Endothelial cell of umbilical vein (primary cell): ENCODE measurements at regions of chr10 and their contacts with region 1.

Region 1: GRCh38 chr10:124741281-124741921 is 2.8 kb downstream of the FAM53B start:
- DNase-seq: peak; percentile 85
- H3K4me3 ChIP-seq: peak overlapping the region in 1 of 3 experiments; percentile 17
- H3K27ac ChIP-seq: no peak overlapping the region
- H3K4me1 ChIP-seq: peaks cover 39% of the 10 kb centered on the region
- H3K27me3 ChIP-seq: no peaks in the 10 kb centered on the region
- CTCF ChIP-seq: peak; percentile 77 to 81
- POLR2A ChIP-seq: no peak

Region 2: GRCh38 chr10:124403548-124403947 is 337.9 kb before region 1 on chr10:
- CTCF ChIA-PET with region 1: interaction called, 5 read pairs
- POLR2A ChIA-PET with region 1: no interaction called
- dilution Hi-C with region 1: no loop called
- intact Hi-C with region 1: loop called (anchors 5 kb)
- DNase-seq: peak; percentile 85
- H3K4me3 ChIP-seq: no peak overlapping the region
- H3K27ac ChIP-seq: no peak overlapping the region
- H3K4me1 ChIP-seq: no peaks in the 10 kb centered on the region
- H3K27me3 ChIP-seq: no peaks in the 10 kb centered on the region
- CTCF ChIP-seq: peak; percentile 60 to 64
- POLR2A ChIP-seq: no peak

Region 3: DNA sequence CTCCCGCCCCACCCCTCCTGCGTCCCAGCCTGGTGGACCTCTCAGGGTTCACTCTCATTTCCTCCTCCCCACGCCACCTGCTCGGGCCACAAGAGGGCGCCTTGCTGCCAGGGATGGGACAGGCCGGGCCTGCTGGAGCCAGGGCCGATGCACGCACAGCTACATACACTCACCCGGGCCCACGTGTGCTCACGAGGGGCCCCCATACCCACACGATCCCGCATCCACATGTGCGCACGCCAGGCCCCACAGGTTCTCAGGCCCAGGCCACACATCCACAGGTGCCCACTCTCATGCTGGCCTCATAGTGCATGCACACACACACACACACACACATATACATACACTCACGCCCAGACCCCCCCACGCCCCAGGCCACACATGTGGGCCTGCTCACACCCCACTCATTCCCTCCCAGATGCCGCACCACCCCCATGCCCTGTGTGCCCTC is 211.2 kb before region 1 on chr10:
- CTCF ChIA-PET with region 1: interaction called, 226 read pairs
- POLR2A ChIA-PET with region 1: no interaction called
- dilution Hi-C with region 1: no loop called
- intact Hi-C with region 1: loop called (anchors 1 kb)
- DNase-seq: peak; percentile 66
- H3K4me3 ChIP-seq: no peak overlapping the region
- H3K27ac ChIP-seq: no peak overlapping the region
- H3K4me1 ChIP-seq: no peaks in the 10 kb centered on the region
- H3K27me3 ChIP-seq: no peaks in the 10 kb centered on the region
- CTCF ChIP-seq: peak; percentile 84 to 96
- POLR2A ChIP-seq: no peak

Region 4: DNA sequence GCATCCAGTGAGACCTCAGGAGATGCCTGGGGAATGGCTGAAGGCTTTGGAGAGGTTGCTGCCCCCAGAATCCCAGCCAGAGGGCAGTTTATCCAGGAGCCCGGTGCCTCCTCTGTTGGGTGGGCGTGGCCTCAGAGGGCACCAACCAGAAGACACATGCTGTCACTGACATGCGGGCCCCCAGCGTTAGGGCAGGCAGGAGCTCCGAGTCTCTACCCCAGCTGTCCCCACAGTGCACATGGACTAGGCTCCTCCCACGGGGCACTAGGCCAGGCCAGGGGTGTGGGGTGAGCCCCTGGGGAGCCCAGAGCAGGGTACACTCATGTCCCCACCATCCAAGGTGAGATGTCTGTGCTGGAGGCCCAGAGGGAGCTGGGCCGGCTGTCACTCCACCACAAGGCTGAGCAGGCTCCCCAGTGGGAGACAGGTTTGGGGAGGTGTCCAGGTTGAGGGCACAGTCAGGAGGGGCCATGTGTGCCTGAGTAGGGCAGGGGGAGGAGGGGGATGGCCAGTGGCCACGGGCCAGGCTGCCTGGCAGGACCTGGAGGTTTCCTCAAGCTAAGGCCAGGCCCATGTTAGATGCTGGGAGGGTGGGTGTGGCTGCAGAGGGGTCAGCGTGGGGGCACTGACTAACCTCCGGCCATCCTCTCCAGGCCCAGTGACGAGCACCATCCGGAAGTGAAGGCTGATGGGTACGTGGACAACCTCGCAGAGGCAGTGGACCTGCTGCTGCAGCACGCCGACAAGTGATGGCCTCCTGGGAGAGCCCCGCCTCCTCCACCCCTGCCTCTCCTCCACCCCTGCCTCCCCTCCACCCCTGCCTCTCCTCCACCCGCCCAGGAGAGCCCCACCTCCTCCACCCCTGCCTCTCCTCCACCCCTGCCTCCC is 128.5 kb before region 1 on chr10:
- CTCF ChIA-PET with region 1: interaction called, 19 read pairs
- POLR2A ChIA-PET with region 1: no interaction called
- dilution Hi-C with region 1: no loop called
- intact Hi-C with region 1: loop called (anchors 1 kb)
- DNase-seq: peak; percentile 48
- H3K4me3 ChIP-seq: no peak overlapping the region
- H3K27ac ChIP-seq: peak overlapping the region; percentile 20
- H3K4me1 ChIP-seq: peaks cover 7% of the 10 kb centered on the region
- H3K27me3 ChIP-seq: no peaks in the 10 kb centered on the region
- CTCF ChIP-seq: no peak
- POLR2A ChIP-seq: no peak

Region 5: GRCh38 chr10:124671486-124672075 is 69.8 kb before region 1 on chr10:
- CTCF ChIA-PET with region 1: interaction called, 13 read pairs
- POLR2A ChIA-PET with region 1: no interaction called
- dilution Hi-C with region 1: no loop called
- intact Hi-C with region 1: no loop called
- DNase-seq: no peak
- H3K4me3 ChIP-seq: no peak overlapping the region
- H3K27ac ChIP-seq: no peak overlapping the region
- H3K4me1 ChIP-seq: peaks cover 7% of the 10 kb centered on the region
- H3K27me3 ChIP-seq: no peaks in the 10 kb centered on the region
- CTCF ChIP-seq: no peak
- POLR2A ChIP-seq: no peak

Region 6: DNA sequence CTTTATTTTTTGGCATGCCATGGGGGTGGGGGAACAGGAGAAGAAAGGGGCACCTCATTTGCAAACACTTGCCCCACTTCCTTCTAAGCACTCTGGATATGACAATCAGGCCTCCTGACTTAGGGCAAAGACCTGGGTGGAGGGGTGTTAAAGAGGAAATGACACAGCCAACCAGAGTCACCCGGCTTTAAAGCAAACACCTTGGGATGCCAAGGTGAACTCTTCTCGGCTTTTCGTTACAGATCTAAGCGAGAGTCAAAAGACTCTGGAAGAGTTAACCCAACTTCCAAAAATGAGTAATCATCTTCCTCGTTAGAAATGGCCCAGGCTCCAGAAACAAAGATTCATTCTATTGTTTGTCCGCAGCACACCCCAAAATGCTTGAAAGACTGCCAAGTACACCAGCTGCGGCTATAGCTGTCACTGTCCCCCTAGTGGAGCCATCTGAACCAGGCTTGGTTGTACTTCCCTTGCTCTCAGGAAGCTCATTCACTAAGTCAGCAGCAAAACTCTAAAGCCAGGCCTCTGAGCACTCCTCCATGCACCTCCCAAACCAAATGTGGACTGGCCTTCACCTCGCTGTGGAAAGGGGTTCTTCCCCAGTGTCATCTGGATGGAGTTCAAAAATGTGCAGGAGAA is 22.1 kb before region 1 on chr10:
- CTCF ChIA-PET with region 1: interaction called, 60 read pairs
- POLR2A ChIA-PET with region 1: interaction called, 5 read pairs
- dilution Hi-C with region 1: no loop called
- intact Hi-C with region 1: loop called (anchors 1 kb)
- DNase-seq: peak; percentile 84
- H3K4me3 ChIP-seq: no peak overlapping the region
- H3K27ac ChIP-seq: no peak overlapping the region
- H3K4me1 ChIP-seq: peaks cover 26% of the 10 kb centered on the region
- H3K27me3 ChIP-seq: no peaks in the 10 kb centered on the region
- CTCF ChIP-seq: peak; percentile 61 to 74
- POLR2A ChIP-seq: no peak

Region 7: GRCh38 chr10:124791378-124792348 is 50.3 kb after region 1 on chr10 and contains the start of gene EEF1AKMT2:
- CTCF ChIA-PET with region 1: interaction called, 9 read pairs
- POLR2A ChIA-PET with region 1: no interaction called
- dilution Hi-C with region 1: no loop called
- intact Hi-C with region 1: loop called (anchors 2 kb)
- DNase-seq: peak; percentile 87
- H3K4me3 ChIP-seq: peak within 1 kb of the TSS; percentile 67 to 78 (median 72)
- H3K27ac ChIP-seq: peak within 1 kb of the TSS; percentile 60
- H3K4me1 ChIP-seq: peaks cover 2% of the 10 kb centered on the region
- H3K27me3 ChIP-seq: peaks cover 0 to 1% of the 10 kb centered on the region in 2 experiments
- CTCF ChIP-seq: no peak
- POLR2A ChIP-seq: peak; percentile 86
- total RNA-seq, gene EEF1AKMT2: 17.1 and 21.3 TPM in 2 replicates